Heart right ventricle (tissue), 16 donors: ENCODE measurements at regions of chr20 and their contacts with region 1.

Region 1: GRCh38 chr20:61678437-61678836 is 387.2 kb downstream of the TAF4 start:
- DNase-seq: no peak
- ATAC-seq: no peak
- H3K4me3 ChIP-seq: no peak overlapping the region
- H3K27ac ChIP-seq: no peak overlapping the region
- H3K4me1 ChIP-seq: no peaks in the 10 kb centered on the region
- H3K27me3 ChIP-seq: peaks cover 0 to 46% (median 9%) of the 10 kb centered on the region in 7 donors
- CTCF ChIP-seq: no peak

Region 2: DNA sequence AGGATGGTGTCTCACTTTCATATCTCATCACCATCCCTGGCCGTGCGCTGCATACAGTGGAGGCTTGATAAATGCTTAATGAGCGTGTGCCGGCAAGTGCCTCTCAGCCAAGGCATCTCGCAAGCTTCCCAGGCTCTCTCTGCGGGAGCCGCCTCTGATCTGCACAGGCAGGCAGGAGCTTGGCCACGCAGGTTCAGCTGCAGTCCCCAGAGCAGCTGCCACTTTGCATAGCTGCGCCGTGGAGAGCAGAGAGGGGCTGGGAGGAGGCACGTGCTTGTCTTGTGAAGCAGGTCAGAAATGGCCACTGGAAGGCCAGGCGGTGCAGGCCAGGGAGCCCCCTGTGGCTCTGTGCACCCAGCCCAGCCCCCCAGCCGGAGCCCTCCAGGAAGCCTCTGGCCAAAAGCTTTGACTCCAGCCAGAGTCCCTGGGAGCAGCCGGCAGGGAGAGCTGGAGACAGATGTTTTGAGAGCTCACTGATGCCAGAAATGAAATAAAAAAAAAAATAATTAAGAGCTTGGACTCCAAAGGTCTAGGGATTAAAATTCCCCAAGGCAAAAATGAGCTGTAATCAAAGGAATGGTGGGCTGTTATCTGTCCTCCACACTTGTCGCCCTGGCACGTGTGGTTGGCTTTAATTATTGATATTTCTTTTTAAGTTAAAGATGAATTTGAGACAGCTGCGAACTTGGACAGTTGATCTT is 49.4 kb before region 1 on chr20:
- intact Hi-C with region 1: loop called in 1 of 10 experiments (anchors 1 kb)
- DNase-seq: no peak
- ATAC-seq: peak in 1 of 8 donors; percentile 34
- H3K4me3 ChIP-seq: no peak overlapping the region
- H3K27ac ChIP-seq: no peak overlapping the region
- H3K4me1 ChIP-seq: peaks cover 0 to 4% (median 0%) of the 10 kb centered on the region in 9 donors
- H3K27me3 ChIP-seq: peaks cover 0 to 52% (median 20%) of the 10 kb centered on the region in 7 donors
- CTCF ChIP-seq: no peak